CD4-positive, alpha-beta memory T cell (primary cell): ENCODE measurements at regions of chr10 and their contacts with region 1.

Region 1: GRCh38 chr10:72331601-72332422 is 22.9 kb downstream of the DNAJB12 start:
- DNase-seq: peak; percentile 92 to 97 (median 94)
- H3K4me3 ChIP-seq: peak overlapping the region; percentile 12 to 47
- H3K4me3 Mint-ChIP-seq: peak overlapping the region; percentile 69 to 86 (median 82)
- H3K27ac ChIP-seq: peak overlapping the region; percentile 65
- H3K27ac Mint-ChIP-seq: peak overlapping the region; percentile 95 to 98 (median 97)
- H3K4me1 ChIP-seq: peaks cover 100% of the 10 kb centered on the region
- H3K4me1 Mint-ChIP-seq: peaks cover 51 to 97% (median 81%) of the 10 kb centered on the region in 4 donors
- H3K27me3 ChIP-seq: no peaks in the 10 kb centered on the region
- H3K27me3 Mint-ChIP-seq: no peaks in the 10 kb centered on the region

Region 2: DNA sequence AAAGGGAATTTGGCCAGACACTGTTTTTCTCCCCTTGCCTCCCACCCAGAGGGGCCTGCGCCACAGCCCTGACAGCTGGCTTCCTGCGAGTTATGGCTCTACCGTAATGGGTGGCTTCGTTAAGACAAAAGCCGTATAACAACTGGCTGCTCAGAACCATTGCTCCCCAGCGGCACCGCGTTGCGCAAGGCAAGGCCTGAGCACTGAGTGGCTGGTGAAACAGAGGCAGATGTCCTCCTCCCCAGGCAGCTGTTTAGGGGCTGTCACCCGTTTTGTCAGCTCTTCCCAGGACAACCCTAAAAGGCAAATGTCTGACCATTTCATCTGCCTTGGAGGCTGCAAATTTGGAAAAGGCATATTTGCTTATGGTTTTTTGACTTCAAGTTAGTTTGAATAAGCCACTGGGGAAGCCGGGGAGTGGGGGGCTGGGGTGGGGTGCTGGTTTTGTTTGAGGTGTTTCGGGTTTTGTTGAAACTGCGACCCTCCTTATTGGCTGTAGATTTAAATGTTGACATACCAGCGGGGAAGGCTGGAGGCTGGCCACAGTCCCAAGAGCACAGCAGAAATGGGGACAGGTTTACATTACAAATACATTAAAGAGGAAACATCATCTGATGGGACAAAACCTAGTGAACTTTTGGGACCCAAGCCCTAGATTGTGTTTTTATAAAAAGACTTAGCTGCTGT is 242.8 kb before region 1 on chr10:
- CTCF ChIA-PET with region 1: interaction called, 11 read pairs
- POLR2A ChIA-PET with region 1: interaction called, 59 read pairs
- intact Hi-C with region 1: no loop called
- DNase-seq: peak in 1 of 5 donors; percentile 78
- H3K4me3 ChIP-seq: peak overlapping the region; percentile 82 to 98
- H3K4me3 Mint-ChIP-seq: peak overlapping the region; percentile 97 to 100 (median 100)
- H3K27ac ChIP-seq: peak overlapping the region; percentile 94
- H3K27ac Mint-ChIP-seq: peak overlapping the region; percentile 97 to 100 (median 100)
- H3K4me1 ChIP-seq: peaks cover 48% of the 10 kb centered on the region
- H3K4me1 Mint-ChIP-seq: peaks cover 31 to 58% (median 43%) of the 10 kb centered on the region in 4 donors
- H3K27me3 ChIP-seq: no peaks in the 10 kb centered on the region
- H3K27me3 Mint-ChIP-seq: peaks cover 0 to 2% of the 10 kb centered on the region in 2 donors

Region 3: DNA sequence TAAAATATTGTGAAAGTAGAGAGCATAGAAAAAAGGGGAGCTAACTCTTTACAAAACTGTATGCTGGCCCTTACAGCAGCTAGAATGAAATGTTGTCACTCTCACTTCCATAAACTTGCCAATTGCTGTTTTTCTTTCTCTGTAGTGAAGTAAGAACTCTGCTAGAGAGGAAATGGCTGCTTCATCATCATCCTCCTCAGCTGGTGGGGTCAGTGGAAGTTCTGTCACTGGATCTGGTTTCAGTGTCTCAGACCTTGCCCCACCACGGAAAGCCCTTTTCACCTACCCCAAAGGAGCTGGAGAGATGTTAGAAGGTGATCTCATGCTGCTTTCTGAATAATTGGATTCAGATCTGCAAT is 108.1 kb before region 1 on chr10:
- CTCF ChIA-PET with region 1: interaction called, 89 read pairs
- POLR2A ChIA-PET with region 1: interaction called, 4 read pairs
- intact Hi-C with region 1: loop called (anchors 2 kb)
- DNase-seq: no peak
- H3K4me3 ChIP-seq: no peak overlapping the region
- H3K4me3 Mint-ChIP-seq: peak overlapping the region in 3 of 8 donors; percentile 22 to 69 (median 44)
- H3K27ac ChIP-seq: no peak overlapping the region
- H3K27ac Mint-ChIP-seq: peak overlapping the region; percentile 17 to 91 (median 78)
- H3K4me1 ChIP-seq: peaks cover 54% of the 10 kb centered on the region
- H3K4me1 Mint-ChIP-seq: peaks cover 36 to 57% (median 45%) of the 10 kb centered on the region in 4 donors
- H3K27me3 ChIP-seq: no peaks in the 10 kb centered on the region
- H3K27me3 Mint-ChIP-seq: no peaks in the 10 kb centered on the region

Region 4: DNA sequence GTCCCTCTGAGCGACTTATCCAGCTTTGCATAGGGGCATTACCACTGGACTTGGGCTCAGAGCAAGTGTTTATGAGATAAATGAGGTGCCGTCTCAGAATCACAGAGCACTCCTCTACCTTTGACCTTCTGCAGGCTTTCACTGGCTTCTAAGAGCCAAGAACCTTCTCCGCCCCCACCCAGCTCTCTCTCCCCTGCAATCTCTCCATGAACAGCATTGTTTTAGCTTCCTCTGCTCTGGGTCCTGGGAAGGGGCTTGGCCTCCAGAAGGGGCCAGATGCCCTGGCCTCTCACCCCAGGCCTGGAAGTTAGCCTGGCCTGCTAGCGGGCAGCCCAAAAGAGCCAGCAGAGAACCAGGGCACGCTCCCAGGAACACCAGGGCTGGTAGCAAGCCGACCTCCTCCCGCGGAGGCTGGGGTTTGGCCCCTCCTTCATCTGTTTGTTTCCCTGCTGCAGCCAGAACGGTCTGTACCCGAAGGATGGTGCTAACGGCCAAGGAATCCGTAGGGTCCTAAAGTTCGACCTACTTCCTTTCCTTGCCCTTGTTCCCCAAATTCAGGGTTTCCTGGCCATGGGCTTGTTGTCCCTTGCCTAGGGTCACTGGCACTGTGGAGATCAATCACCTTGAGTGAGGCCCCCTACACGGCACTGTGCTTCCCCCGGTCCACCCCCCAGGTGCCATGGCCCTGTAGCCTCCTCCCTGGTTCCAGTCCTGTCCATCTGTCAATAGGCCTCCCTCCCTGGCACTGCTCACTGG is 76.8 kb before region 1 on chr10:
- CTCF ChIA-PET with region 1: interaction called, 11 read pairs
- POLR2A ChIA-PET with region 1: interaction called, 14 read pairs
- intact Hi-C with region 1: no loop called
- DNase-seq: peak in 3 of 5 donors; percentile 12 to 27 (median 26)
- H3K4me3 ChIP-seq: peak overlapping the region in 1 of 2 donors; percentile 13
- H3K4me3 Mint-ChIP-seq: peak overlapping the region; percentile 59 to 89 (median 70)
- H3K27ac ChIP-seq: peak overlapping the region; percentile 46
- H3K27ac Mint-ChIP-seq: peak overlapping the region; percentile 69 to 91 (median 86)
- H3K4me1 ChIP-seq: peaks cover 91% of the 10 kb centered on the region
- H3K4me1 Mint-ChIP-seq: peaks cover 50 to 88% (median 69%) of the 10 kb centered on the region in 4 donors
- H3K27me3 ChIP-seq: no peaks in the 10 kb centered on the region
- H3K27me3 Mint-ChIP-seq: no peaks in the 10 kb centered on the region

Region 5: DNA sequence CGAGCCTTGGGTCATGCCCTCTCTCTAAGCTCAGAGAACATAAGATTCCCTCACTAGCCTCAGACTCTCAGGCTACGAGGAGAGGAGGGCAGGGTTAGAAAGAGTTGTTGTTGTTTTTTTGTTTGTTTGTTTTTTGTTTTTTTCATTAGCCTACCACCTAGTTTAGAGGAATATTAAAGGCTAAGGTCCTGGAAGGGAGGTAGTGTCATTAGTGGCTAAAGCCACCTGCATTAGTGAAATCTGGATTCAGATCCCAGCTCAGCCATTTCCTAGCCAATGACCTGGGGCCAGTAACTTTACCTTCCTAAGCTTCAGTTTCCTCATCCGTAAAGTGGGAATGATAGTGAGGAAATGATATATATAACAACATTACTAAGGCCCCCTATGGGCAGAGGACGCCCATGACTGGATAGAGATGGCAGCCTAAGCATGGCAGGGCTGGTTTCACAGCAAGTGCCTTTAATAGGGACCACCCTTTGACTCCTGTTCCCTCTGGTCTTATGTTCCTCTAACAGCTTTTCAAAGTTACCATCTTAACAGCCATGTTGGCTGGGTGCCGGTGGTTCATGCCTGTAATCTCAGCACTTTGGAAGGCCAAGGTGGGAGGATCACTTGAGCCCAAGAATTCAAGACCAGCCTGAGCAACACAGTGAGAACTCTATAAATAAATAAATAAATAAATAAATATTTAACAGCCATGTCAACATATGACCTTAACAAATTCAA is 53.0 kb before region 1 on chr10:
- CTCF ChIA-PET with region 1: interaction called, 168 read pairs
- POLR2A ChIA-PET with region 1: interaction called, 94 read pairs
- intact Hi-C with region 1: loop called (anchors 1 kb)
- DNase-seq: no peak
- H3K4me3 ChIP-seq: no peak overlapping the region
- H3K4me3 Mint-ChIP-seq: peak overlapping the region in 2 of 8 donors; percentile 16 to 24
- H3K27ac ChIP-seq: no peak overlapping the region
- H3K27ac Mint-ChIP-seq: peak overlapping the region in 6 of 7 donors; percentile 55 to 88 (median 83)
- H3K4me1 ChIP-seq: peaks cover 30% of the 10 kb centered on the region
- H3K4me1 Mint-ChIP-seq: peaks cover 24 to 50% (median 38%) of the 10 kb centered on the region in 4 donors
- H3K27me3 ChIP-seq: no peaks in the 10 kb centered on the region
- H3K27me3 Mint-ChIP-seq: no peaks in the 10 kb centered on the region

Region 6: DNA sequence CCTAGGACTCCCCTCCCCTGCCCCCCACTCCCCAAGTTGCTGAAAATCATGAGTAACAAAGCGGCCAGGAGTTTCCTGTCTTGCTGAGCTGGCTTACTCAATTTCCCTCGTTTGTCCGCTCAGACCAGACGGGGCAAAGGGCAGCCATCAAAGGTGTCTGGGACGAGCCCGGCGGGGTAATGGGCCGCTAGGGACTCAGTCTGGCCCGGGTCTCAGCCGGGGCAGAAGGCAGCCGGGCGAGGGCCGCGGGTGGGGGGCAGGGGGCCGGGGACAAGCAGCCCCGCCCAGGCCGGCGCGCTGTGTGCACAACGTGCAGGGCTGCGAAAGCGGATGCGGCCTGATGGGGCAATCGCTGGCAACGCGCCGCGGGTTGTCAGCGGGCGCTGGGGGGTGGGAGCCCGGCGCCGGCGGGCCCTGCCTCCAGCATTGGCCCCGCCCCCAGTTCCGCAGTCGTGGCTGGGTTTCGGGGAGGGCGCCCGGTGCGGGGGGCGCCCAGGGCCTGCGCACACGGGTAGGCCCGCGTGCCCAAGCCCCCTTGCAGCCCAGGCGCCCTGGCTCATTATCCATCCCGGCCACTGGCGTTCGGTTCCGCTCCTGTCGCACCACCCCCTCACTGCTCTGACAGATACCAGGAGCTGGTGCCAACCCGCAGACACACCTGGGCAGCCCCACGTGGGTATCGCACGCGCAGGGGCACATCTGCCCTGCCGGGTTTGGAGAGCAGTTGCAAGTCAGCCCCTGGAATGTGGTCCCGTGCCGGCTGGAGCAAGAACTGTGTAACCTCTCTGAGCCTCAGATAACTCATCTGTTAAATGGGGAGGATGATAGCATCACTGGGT is 12.2 kb before region 1 on chr10:
- CTCF ChIA-PET with region 1: interaction called, 7 read pairs
- POLR2A ChIA-PET with region 1: interaction called, 125 read pairs
- intact Hi-C with region 1: loop called (anchors 1 kb)
- DNase-seq: peak; percentile 87 to 91 (median 89)
- H3K4me3 ChIP-seq: peak overlapping the region; percentile 46 to 55
- H3K4me3 Mint-ChIP-seq: peak overlapping the region; percentile 79 to 89 (median 84)
- H3K27ac ChIP-seq: peak overlapping the region; percentile 89
- H3K27ac Mint-ChIP-seq: peak overlapping the region; percentile 96 to 99 (median 99)
- H3K4me1 ChIP-seq: peaks cover 95% of the 10 kb centered on the region
- H3K4me1 Mint-ChIP-seq: peaks cover 53 to 92% (median 74%) of the 10 kb centered on the region in 4 donors
- H3K27me3 ChIP-seq: no peaks in the 10 kb centered on the region
- H3K27me3 Mint-ChIP-seq: no peaks in the 10 kb centered on the region